WTC11 (cell line): ENCODE measurements at regions of chr22 and their contacts with region 1.

Region 1: DNA sequence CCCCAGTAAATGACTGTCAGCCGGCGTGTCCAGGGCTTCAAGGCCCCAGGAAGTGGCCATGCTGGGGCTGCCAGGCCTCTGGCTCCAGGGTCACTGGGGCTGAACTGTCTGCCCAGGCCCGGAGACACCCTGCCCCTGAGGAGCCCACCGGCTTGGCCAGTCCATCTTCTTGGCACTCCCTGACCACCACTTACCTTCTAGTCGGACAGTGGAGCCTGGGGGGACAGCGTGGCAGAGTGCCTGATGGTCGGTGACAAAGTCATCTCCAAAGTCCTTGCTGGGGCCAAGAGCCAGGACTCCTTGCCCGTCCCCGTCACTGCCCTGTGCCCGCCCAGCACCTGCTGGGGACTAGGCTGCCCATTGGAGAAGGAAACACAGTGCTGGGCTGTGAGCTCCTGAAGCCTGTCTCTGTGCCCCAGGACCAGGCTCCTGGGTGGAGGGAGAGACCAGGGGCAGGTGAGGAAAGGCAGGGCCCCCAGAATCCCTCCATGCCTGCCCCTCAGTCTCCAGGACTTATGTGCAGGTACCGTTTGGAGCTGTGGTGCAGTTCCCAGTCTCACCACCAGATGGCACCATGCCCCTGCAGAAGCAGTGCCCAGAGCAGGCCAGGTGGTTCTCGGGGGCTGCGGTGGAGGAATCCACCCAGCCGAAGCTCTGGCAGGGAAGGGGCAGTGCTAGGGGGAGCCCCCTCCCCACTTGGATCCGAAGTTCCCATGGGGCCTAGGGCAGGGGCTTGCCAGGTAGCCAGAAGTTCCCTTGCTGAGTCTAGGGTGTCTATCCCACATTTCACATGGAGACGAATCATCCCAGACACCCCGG is 6.0 kb upstream of the CCDC188 start:
- DNase-seq: peak; percentile 97
- ATAC-seq: peak; percentile 64
- H3K4me3 Mint-ChIP-seq: no peak overlapping the region
- H3K27ac Mint-ChIP-seq: no peak overlapping the region
- H3K4me1 Mint-ChIP-seq: peaks cover 7% of the 10 kb centered on the region
- H3K27me3 Mint-ChIP-seq: no peaks in the 10 kb centered on the region
- CTCF ChIP-seq: peak; percentile 100

Region 2: DNA sequence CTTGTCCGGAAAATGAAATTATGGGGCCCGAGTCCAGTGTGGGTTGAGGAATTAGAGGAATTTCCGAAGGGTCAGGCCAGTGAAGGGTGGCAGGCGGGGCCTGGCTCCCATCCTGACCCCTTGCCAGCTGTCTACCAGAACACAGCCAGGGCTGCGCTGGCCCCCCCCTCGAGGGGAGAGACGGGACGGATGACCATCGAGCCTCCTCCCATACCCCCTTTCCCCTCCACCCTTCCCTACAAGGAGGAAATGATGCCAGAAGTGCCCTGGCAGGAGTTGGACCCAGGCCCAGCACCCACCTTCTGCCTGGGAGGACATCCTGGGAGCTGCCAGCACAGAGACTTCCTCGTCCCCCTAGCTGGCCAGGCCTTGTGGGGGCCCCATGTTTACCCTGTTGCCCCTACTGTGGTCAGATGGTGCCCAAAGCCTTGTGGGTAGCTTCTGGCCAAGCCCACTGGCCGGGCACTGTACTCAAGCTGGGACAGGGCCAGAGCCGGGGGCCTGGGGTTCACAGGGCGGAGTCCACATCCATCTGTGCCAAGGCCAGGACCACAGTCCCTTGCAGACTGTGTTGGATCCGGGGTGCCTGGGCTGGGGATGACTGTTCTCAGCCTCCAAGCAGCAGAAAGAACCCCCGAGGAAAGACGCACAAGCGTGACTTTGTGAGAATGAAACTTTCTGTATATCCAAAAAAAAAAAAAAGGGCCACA is 161.0 kb before region 1 on chr22:
- CTCF ChIA-PET with region 1: no interaction called
- POLR2A ChIA-PET with region 1: no interaction called
- DNase-seq: no peak
- ATAC-seq: no peak
- H3K4me3 Mint-ChIP-seq: no peak overlapping the region
- H3K27ac Mint-ChIP-seq: no peak overlapping the region
- H3K4me1 Mint-ChIP-seq: peaks cover 22% of the 10 kb centered on the region
- H3K27me3 Mint-ChIP-seq: no peaks in the 10 kb centered on the region
- CTCF ChIP-seq: no peak

Region 3: GRCh38 chr22:20130739-20131596 is 25.9 kb before region 1 on chr22:
- CTCF ChIA-PET with region 1: interaction called, 13 read pairs
- POLR2A ChIA-PET with region 1: no interaction called
- DNase-seq: peak; percentile 77
- ATAC-seq: peak; percentile 61
- H3K4me3 Mint-ChIP-seq: peak overlapping the region; percentile 59
- H3K27ac Mint-ChIP-seq: no peak overlapping the region
- H3K4me1 Mint-ChIP-seq: 0 out of 2 replicates have a peak, but pooled peaks cover 6% of the 10 kb centered on the region
- H3K27me3 Mint-ChIP-seq: no peaks in the 10 kb centered on the region
- CTCF ChIP-seq: no peak

Region 4: DNA sequence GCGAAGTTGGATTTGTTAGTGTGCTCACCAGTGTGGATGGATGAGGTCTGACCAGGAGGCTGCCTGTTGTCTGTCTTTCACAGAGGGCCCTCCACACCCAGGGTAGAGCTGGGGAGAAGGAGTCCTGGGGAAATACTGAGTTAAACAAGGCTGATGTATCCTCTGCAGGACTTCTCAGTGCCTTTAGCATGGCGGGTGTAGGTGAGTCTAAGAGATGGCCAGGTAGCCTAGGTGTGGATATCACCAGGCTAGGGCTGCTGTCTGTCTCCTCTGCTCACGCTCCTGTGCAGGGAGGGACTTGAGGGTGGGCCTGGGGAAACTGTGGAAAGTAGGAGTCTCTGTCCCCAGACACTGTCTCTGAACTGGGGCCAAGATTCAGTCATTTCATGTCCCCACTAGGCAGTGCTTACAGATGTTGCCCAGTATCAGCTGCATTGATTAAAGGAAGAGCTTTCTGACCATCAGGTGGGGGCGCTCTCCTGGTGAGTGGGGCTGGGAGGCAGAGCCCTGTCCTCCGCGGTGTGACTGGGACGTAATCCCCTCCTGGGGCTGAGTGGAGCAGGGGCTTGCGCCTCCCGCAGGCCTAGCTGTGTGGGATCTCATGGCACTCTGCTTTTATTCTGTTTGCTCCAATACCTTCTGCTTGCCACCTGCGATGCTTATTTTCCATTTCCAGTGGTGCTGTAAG is 29.5 kb after region 1 on chr22:
- CTCF ChIA-PET with region 1: interaction called, 20 read pairs
- POLR2A ChIA-PET with region 1: no interaction called
- DNase-seq: peak; percentile 81
- ATAC-seq: peak; percentile 95
- H3K4me3 Mint-ChIP-seq: no peak overlapping the region
- H3K27ac Mint-ChIP-seq: no peak overlapping the region
- H3K4me1 Mint-ChIP-seq: no peaks in the 10 kb centered on the region
- H3K27me3 Mint-ChIP-seq: no peaks in the 10 kb centered on the region
- CTCF ChIP-seq: no peak

Region 5: GRCh38 chr22:20211997-20212753 is 55.4 kb after region 1 on chr22:
- CTCF ChIA-PET with region 1: interaction called, 10 read pairs
- POLR2A ChIA-PET with region 1: no interaction called
- DNase-seq: no peak
- ATAC-seq: no peak
- H3K4me3 Mint-ChIP-seq: no peak overlapping the region
- H3K27ac Mint-ChIP-seq: no peak overlapping the region
- H3K4me1 Mint-ChIP-seq: no peaks in the 10 kb centered on the region
- H3K27me3 Mint-ChIP-seq: no peaks in the 10 kb centered on the region
- CTCF ChIP-seq: no peak

Region 6: GRCh38 chr22:20283674-20284066 is 126.8 kb after region 1 on chr22:
- CTCF ChIA-PET with region 1: interaction called, 43 read pairs
- POLR2A ChIA-PET with region 1: interaction called, 3 read pairs
- DNase-seq: no peak
- ATAC-seq: no peak
- H3K4me3 Mint-ChIP-seq: no peak overlapping the region
- H3K27ac Mint-ChIP-seq: no peak overlapping the region
- H3K4me1 Mint-ChIP-seq: no peaks in the 10 kb centered on the region
- H3K27me3 Mint-ChIP-seq: no peaks in the 10 kb centered on the region
- CTCF ChIP-seq: no peak

Region 7: GRCh38 chr22:20438678-20439492 is 282.1 kb after region 1 on chr22:
- CTCF ChIA-PET with region 1: no interaction called
- POLR2A ChIA-PET with region 1: no interaction called
- DNase-seq: peak; percentile 54
- ATAC-seq: peak; percentile 31
- H3K4me3 Mint-ChIP-seq: peak overlapping the region; percentile 62
- H3K27ac Mint-ChIP-seq: no peak overlapping the region
- H3K4me1 Mint-ChIP-seq: peaks cover 21% of the 10 kb centered on the region
- H3K27me3 Mint-ChIP-seq: peaks cover 49% of the 10 kb centered on the region
- CTCF ChIP-seq: no peak